Naive thymus-derived CD4-positive, alpha-beta T cell (primary cell): ENCODE measurements at regions of chr15 and their contacts with region 1.

Region 1: DNA sequence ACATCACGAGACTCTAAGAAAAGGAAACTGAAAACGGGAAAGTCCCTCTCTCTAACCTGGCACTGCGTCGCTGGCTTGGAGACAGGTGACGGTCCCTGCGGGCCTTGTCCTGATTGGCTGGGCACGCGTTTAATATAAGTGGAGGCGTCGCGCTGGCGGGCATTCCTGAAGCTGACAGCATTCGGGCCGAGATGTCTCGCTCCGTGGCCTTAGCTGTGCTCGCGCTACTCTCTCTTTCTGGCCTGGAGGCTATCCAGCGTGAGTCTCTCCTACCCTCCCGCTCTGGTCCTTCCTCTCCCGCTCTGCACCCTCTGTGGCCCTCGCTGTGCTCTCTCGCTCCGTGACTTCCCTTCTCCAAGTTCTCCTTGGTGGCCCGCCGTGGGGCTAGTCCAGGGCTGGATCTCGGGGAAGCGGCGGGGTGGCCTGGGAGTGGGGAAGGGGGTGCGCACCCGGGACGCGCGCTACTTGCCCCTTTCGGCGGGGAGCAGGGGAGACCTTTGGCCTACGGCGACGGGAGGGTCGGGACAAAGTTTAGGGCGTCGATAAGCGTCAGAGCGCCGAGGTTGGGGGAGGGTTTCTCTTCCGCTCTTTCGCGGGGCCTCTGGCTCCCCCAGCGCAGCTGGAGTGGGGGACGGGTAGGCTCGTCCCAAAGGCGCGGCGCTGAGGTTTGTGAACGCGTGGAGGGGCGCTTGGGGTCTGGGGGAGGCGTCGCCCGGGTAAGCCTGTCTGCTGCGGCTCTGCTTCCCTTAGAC is at the start of gene B2M:
- DNase-seq: peak; percentile 95 to 98 (median 97)
- ATAC-seq: peak; percentile 84
- H3K4me3 ChIP-seq: peak within 1 kb of the TSS; percentile 83
- H3K4me3 Mint-ChIP-seq: peak within 1 kb of the TSS; percentile 93 to 100 (median 98)
- H3K27ac ChIP-seq: peak within 1 kb of the TSS; percentile 95
- H3K27ac Mint-ChIP-seq: peak within 1 kb of the TSS; percentile 98 to 100 (median 100)
- H3K4me1 ChIP-seq: peaks cover 15 to 26% of the 10 kb centered on the region in 2 donors
- H3K4me1 Mint-ChIP-seq: peaks cover 31 to 76% (median 54%) of the 10 kb centered on the region in 7 donors
- H3K27me3 ChIP-seq: no peaks in the 10 kb centered on the region
- H3K27me3 Mint-ChIP-seq: peaks cover 0 to 17% (median 0%) of the 10 kb centered on the region in 5 donors
- total RNA-seq, gene B2M: 4,325 to 8,698 (median 6,221) TPM

Region 2: DNA sequence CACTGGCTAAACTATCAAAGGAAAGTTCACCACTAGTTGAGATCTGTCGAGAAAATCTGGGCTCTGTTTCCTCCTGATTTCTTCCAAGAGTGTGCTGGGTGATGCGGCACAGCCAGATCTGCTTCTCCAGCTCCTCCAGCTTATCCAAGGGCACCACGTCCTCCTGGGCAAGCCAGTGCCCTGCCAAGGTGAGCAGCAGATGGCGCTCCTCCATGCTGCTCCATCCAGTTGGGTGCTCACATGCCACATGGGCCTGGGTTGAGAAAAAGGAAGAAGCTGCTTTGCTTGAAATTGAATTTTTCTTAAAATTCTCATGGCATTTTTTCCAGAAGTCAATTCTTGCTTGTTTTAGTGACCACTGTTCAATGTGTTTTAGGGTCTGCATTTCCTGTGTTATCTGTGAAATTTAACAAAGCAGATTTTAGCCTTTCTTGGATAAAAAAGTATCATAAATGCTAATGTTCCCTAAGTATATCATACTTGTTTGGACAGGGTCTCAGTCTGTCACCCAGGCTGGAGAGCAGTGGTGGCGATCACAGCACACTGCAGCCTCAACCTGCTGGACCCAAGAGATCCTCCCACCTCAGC is 127.3 kb before region 1 on chr15:
- CTCF ChIA-PET with region 1: interaction called, 3 read pairs
- POLR2A ChIA-PET with region 1: interaction called, 12 read pairs
- intact Hi-C with region 1: no loop called
- DNase-seq: peak; percentile 21 to 56 (median 46)
- ATAC-seq: peak; percentile 89
- H3K4me3 ChIP-seq: no peak overlapping the region
- H3K4me3 Mint-ChIP-seq: no peak overlapping the region
- H3K27ac ChIP-seq: no peak overlapping the region
- H3K27ac Mint-ChIP-seq: peak overlapping the region in 4 of 9 donors; percentile 33 to 70 (median 61)
- H3K4me1 ChIP-seq: peaks cover 0 to 1% of the 10 kb centered on the region in 2 donors
- H3K4me1 Mint-ChIP-seq: peaks cover 3 to 25% (median 18%) of the 10 kb centered on the region in 7 donors
- H3K27me3 ChIP-seq: no peaks in the 10 kb centered on the region
- H3K27me3 Mint-ChIP-seq: no peaks in the 10 kb centered on the region

Region 3: DNA sequence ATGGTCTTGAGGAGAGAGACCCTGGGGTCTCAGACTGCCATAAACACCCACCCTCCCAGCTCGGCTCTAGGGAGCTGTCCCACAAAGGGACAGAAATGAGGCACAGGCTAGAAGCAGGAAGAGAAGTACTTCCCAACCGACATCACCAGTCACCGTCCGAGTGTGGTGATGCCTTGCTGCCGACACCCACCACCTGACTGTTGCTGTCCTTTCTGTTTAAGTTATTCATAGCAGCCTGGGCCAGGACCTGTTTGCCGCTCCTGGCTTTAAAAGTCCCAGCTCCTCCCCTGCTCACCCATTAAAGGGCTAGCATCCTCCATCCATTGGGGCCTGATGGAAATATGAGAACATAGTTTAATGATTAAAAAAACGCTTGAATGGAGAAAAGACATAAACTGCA is 34.9 kb before region 1 on chr15:
- CTCF ChIA-PET with region 1: interaction called, 19 read pairs
- POLR2A ChIA-PET with region 1: interaction called, 3,822 read pairs
- intact Hi-C with region 1: loop called (anchors 1 kb)
- DNase-seq: peak in 1 of 9 donors; percentile 31
- ATAC-seq: peak; percentile 56
- H3K4me3 ChIP-seq: peak overlapping the region; percentile 44
- H3K4me3 Mint-ChIP-seq: peak overlapping the region; percentile 72 to 92 (median 84)
- H3K27ac ChIP-seq: peak overlapping the region; percentile 60
- H3K27ac Mint-ChIP-seq: peak overlapping the region; percentile 89 to 99 (median 96)
- H3K4me1 ChIP-seq: peaks cover 83 to 85% of the 10 kb centered on the region in 2 donors
- H3K4me1 Mint-ChIP-seq: peaks cover 67 to 96% (median 92%) of the 10 kb centered on the region in 7 donors
- H3K27me3 ChIP-seq: no peaks in the 10 kb centered on the region
- H3K27me3 Mint-ChIP-seq: no peaks in the 10 kb centered on the region

Region 4: DNA sequence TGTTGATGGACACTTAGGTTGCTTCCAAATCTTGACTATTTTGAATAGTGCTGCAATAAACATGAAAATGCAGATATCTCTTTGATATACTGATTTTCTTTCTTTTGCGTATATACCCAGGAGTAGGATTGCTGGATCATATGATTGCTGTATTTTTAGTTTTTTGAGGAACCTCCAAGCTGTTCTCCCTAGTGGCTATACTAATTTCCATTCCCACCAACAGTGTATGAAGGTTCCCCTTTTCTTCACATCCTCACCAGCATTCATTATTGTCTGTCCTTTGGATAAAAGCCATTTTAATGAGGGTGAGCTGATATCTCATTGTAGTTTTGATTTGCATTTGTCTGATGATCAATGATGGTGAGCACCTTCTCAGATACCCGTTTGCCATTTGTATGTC is 12.9 kb before region 1 on chr15:
- CTCF ChIA-PET with region 1: interaction called, 4 read pairs
- POLR2A ChIA-PET with region 1: interaction called, 3,822 read pairs
- intact Hi-C with region 1: no loop called
- DNase-seq: no peak
- ATAC-seq: no peak
- H3K4me3 ChIP-seq: no peak overlapping the region
- H3K4me3 Mint-ChIP-seq: no peak overlapping the region
- H3K27ac ChIP-seq: no peak overlapping the region
- H3K27ac Mint-ChIP-seq: peak overlapping the region in 2 of 9 donors; percentile 7 to 65
- H3K4me1 ChIP-seq: no peaks in the 10 kb centered on the region
- H3K4me1 Mint-ChIP-seq: peaks cover 18 to 49% (median 36%) of the 10 kb centered on the region in 7 donors
- H3K27me3 ChIP-seq: no peaks in the 10 kb centered on the region
- H3K27me3 Mint-ChIP-seq: peaks cover 0 to 20% (median 0%) of the 10 kb centered on the region in 5 donors

Region 5: DNA sequence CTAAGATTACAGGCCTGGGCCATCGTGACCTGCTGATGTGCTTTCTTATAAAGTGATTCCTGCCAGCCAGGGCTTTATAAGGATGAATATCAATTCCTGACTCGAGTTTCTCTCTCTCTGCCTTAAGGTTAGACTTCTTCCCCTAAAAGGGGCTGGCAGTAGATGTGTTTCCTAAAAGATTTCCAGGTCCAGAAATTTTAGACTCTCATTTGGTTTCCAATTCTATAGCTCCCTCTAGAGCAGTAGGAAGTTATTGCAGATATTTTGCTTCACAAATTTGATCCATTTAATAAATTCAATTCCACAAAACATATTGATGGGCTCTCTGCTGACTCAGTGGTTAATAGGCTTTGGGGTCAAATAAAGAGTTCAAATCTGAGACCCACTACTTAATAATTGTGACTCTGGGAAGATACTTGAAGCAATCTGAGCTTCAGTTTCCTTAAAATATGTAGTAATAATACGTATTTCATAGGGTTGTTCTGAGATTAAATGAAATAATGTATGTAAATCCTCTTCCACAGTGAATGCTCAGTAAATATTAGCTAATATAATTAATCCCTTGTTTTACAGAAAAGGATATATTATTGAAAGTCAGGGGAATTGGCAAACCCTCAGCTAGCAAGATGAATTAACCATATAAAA is 26.9 kb after region 1 on chr15:
- CTCF ChIA-PET with region 1: interaction called, 171 read pairs
- POLR2A ChIA-PET with region 1: interaction called, 2,064 read pairs
- intact Hi-C with region 1: loop called (anchors 1 kb)
- DNase-seq: peak in 6 of 9 donors; percentile 40 to 67 (median 60)
- ATAC-seq: peak; percentile 68
- H3K4me3 ChIP-seq: no peak overlapping the region
- H3K4me3 Mint-ChIP-seq: peak overlapping the region in 7 of 10 donors; percentile 49 to 67 (median 53)
- H3K27ac ChIP-seq: peak overlapping the region; percentile 54
- H3K27ac Mint-ChIP-seq: peak overlapping the region; percentile 23 to 95 (median 86)
- H3K4me1 ChIP-seq: peaks cover 42 to 56% of the 10 kb centered on the region in 2 donors
- H3K4me1 Mint-ChIP-seq: peaks cover 24 to 62% (median 56%) of the 10 kb centered on the region in 7 donors
- H3K27me3 ChIP-seq: no peaks in the 10 kb centered on the region
- H3K27me3 Mint-ChIP-seq: peaks cover 0 to 2% (median 0%) of the 10 kb centered on the region in 5 donors

Region 6: GRCh38 chr15:44782516-44782915 is 71.0 kb after region 1 on chr15:
- CTCF ChIA-PET with region 1: no interaction called
- POLR2A ChIA-PET with region 1: interaction called, 11 read pairs
- intact Hi-C with region 1: no loop called
- DNase-seq: no peak
- ATAC-seq: no peak
- H3K4me3 ChIP-seq: no peak overlapping the region
- H3K4me3 Mint-ChIP-seq: no peak overlapping the region
- H3K27ac ChIP-seq: no peak overlapping the region
- H3K27ac Mint-ChIP-seq: peak overlapping the region in 1 of 9 donors; percentile 51
- H3K4me1 ChIP-seq: peaks cover 6 to 7% of the 10 kb centered on the region in 2 donors
- H3K4me1 Mint-ChIP-seq: peaks cover 5 to 13% (median 9%) of the 10 kb centered on the region in 7 donors
- H3K27me3 ChIP-seq: no peaks in the 10 kb centered on the region
- H3K27me3 Mint-ChIP-seq: peaks cover 0 to 2% (median 0%) of the 10 kb centered on the region in 5 donors